ENCODE measurements at regions of chr7 and their contacts with region 1.

Region 1: GRCh38 chr7:50119815-50120637 is 27.0 kb upstream of the ZPBP start:
- DNase-seq: no peak
- ATAC-seq: peak; percentile 98
- H3K4me3 ChIP-seq: no peak overlapping the region
- H3K27ac ChIP-seq: no peak overlapping the region
- H3K4me1 ChIP-seq: peaks cover 4% of the 10 kb centered on the region; the same call in 1 of the 2 replicates
- H3K27me3 ChIP-seq: no peaks in the 10 kb centered on the region
- CTCF ChIP-seq: peak; percentile 68 to 70 (median 69)
- EP300 ChIP-seq: no peak
- POLR2A ChIP-seq: no peak
- RAD21 ChIP-seq: peak; percentile 77

Region 2: GRCh38 chr7:49497471-49497870 is 622.6 kb before region 1 on chr7:
- CTCF ChIA-PET with region 1: no interaction called
- POLR2A ChIA-PET with region 1: no interaction called
- RAD21 ChIA-PET with region 1: no interaction called
- SMC1A ChIA-PET with region 1: no interaction called
- in situ Hi-C with region 1: no loop called
- intact Hi-C with region 1: no loop called
- DNase-seq: no peak
- ATAC-seq: peak; percentile 67
- H3K4me3 ChIP-seq: no peak overlapping the region
- H3K27ac ChIP-seq: no peak overlapping the region
- H3K4me1 ChIP-seq: no peaks in the 10 kb centered on the region
- H3K27me3 ChIP-seq: no peaks in the 10 kb centered on the region
- CTCF ChIP-seq: no peak
- EP300 ChIP-seq: no peak
- POLR2A ChIP-seq: no peak
- RAD21 ChIP-seq: no peak

Region 3: DNA sequence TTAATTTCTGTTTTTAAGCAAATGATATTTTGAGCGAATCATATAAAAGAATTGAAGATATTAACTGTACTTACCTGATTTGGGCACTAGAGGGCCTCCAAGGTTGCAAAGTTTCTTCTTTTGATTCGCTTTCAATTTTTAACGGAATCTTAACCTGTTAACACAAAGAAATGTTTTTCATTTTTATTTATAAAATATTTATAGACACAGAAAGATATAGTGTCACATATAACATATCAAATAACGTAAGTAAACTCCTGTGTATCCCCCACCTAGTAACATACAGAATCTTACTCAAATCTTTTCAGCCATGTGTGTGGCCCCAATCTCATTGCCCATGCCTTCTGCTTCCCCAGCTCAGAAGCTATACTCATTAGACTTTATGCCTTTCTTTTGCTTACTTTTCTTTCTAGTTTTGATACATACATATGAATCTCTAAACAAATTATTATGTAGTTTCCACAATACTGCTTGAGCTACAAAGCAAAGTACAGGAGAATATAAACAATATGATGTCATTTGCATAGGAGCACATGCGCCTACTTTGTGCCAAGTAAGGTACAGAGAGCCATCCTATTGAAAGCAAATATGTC is 22.5 kb after region 1 on chr7:
- CTCF ChIA-PET with region 1: interaction called, 24 read pairs
- POLR2A ChIA-PET with region 1: no interaction called
- RAD21 ChIA-PET with region 1: interaction called, 8 read pairs
- SMC1A ChIA-PET with region 1: interaction called, 6 read pairs
- in situ Hi-C with region 1: no loop called
- intact Hi-C with region 1: no loop called
- DNase-seq: peak; percentile 24
- ATAC-seq: peak; percentile 51
- H3K4me3 ChIP-seq: no peak overlapping the region
- H3K27ac ChIP-seq: no peak overlapping the region
- H3K4me1 ChIP-seq: peaks cover 24% of the 10 kb centered on the region
- H3K27me3 ChIP-seq: no peaks in the 10 kb centered on the region; a peak in 1 of 4 replicates
- CTCF ChIP-seq: peak; percentile 55 to 61 (median 60)
- EP300 ChIP-seq: no peak
- POLR2A ChIP-seq: no peak
- RAD21 ChIP-seq: peak; percentile 85

Region 4: GRCh38 chr7:50379082-50379481 is 259.1 kb after region 1 on chr7:
- CTCF ChIA-PET with region 1: interaction called, 11 read pairs
- POLR2A ChIA-PET with region 1: no interaction called
- RAD21 ChIA-PET with region 1: no interaction called
- SMC1A ChIA-PET with region 1: no interaction called
- in situ Hi-C with region 1: no loop called
- intact Hi-C with region 1: no loop called
- DNase-seq: no peak
- ATAC-seq: peak; percentile 61
- H3K4me3 ChIP-seq: no peak overlapping the region
- H3K27ac ChIP-seq: no peak overlapping the region
- H3K4me1 ChIP-seq: no peaks in the 10 kb centered on the region
- H3K27me3 ChIP-seq: no peaks in the 10 kb centered on the region
- CTCF ChIP-seq: no peak
- EP300 ChIP-seq: no peak
- POLR2A ChIP-seq: no peak
- RAD21 ChIP-seq: no peak

Region 5: GRCh38 chr7:50632561-50633413 is 512.8 kb after region 1 on chr7:
- CTCF ChIA-PET with region 1: interaction called, 17 read pairs
- POLR2A ChIA-PET with region 1: no interaction called
- RAD21 ChIA-PET with region 1: interaction called, 3 read pairs
- SMC1A ChIA-PET with region 1: interaction called, 4 read pairs
- in situ Hi-C with region 1: no loop called
- intact Hi-C with region 1: no loop called
- DNase-seq: no peak
- ATAC-seq: peak; percentile 91
- H3K4me3 ChIP-seq: no peak overlapping the region
- H3K27ac ChIP-seq: no peak overlapping the region
- H3K4me1 ChIP-seq: no peaks in the 10 kb centered on the region
- H3K27me3 ChIP-seq: peaks cover 0 to 1% of the 10 kb centered on the region in 2 experiments; a peak in 3 of 4 replicates
- CTCF ChIP-seq: peak; percentile 73 to 95 (median 88)
- EP300 ChIP-seq: no peak
- POLR2A ChIP-seq: no peak
- RAD21 ChIP-seq: peak; percentile 65

Measured in GM12878 (cell line).